Transverse colon (tissue), 4 donors: ENCODE measurements at regions of chr17 and their contacts with region 1.

Region 1: GRCh38 chr17:64281962-64282727 is 19.1 kb upstream of the TEX2 start:
- DNase-seq: peak; percentile 45
- H3K4me3 ChIP-seq: no peak overlapping the region
- H3K27ac ChIP-seq: no peak overlapping the region
- H3K4me1 ChIP-seq: peaks cover 0 to 21% (median 5%) of the 10 kb centered on the region in 4 donors
- H3K27me3 ChIP-seq: no peaks in the 10 kb centered on the region
- CTCF ChIP-seq: peak; percentile 67 to 78 (median 74)
- EP300 ChIP-seq: no peak
- POLR2A ChIP-seq: no peak

Region 2: GRCh38 chr17:63919311-63919723 is 362.8 kb before region 1 on chr17:
- in situ Hi-C with region 1: loop called in 2 of 4 experiments (anchors 25 kb)
- intact Hi-C with region 1: loop called (anchors 10 kb)
- DNase-seq: peak; percentile 69
- H3K4me3 ChIP-seq: no peak overlapping the region
- H3K27ac ChIP-seq: no peak overlapping the region
- H3K4me1 ChIP-seq: no peaks in the 10 kb centered on the region
- H3K27me3 ChIP-seq: no peaks in the 10 kb centered on the region
- CTCF ChIP-seq: peak; percentile 94 to 98 (median 95)
- EP300 ChIP-seq: no peak
- POLR2A ChIP-seq: no peak

Region 3: GRCh38 chr17:64025732-64026294 is 256.3 kb before region 1 on chr17:
- in situ Hi-C with region 1: loop called in 3 of 4 experiments (anchors 25 kb)
- intact Hi-C with region 1: no loop called
- DNase-seq: peak; percentile 87
- H3K4me3 ChIP-seq: peak overlapping the region in 2 of 4 donors; percentile 12 to 17
- H3K27ac ChIP-seq: peak overlapping the region in 1 of 4 donors; percentile 29
- H3K4me1 ChIP-seq: peaks cover 0 to 10% (median 3%) of the 10 kb centered on the region in 4 donors
- H3K27me3 ChIP-seq: no peaks in the 10 kb centered on the region
- CTCF ChIP-seq: peak; percentile 91 to 95 (median 94)
- EP300 ChIP-seq: no peak
- POLR2A ChIP-seq: no peak

Region 4: DNA sequence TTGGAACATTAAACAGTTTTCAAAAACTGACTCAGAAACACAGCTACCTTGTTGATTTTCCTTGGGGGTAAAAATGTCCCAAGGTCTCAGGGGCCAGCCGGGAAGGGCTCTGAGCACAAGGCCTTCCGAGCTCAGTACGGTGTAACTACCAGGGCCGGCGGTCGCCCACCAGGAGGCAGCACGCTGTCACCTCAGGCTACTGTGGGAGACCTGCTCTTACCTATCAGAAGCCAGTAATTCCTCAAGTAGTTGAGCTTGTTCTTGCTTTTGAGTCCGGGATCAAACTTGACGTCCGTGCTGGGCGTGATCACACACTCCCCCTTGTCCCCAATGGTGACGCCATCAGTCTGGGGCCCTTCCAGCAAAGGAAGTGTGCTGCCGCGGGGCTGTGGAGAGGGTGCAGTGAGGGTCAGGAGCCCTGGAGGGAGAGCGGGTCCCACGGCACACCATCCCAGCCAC is 218.3 kb before region 1 on chr17:
- in situ Hi-C with region 1: loop called in 1 of 4 experiments (anchors 25 kb)
- intact Hi-C with region 1: no loop called
- DNase-seq: peak; percentile 76
- H3K4me3 ChIP-seq: peak overlapping the region in 1 of 4 donors; percentile 9
- H3K27ac ChIP-seq: peak overlapping the region; percentile 1 to 72 (median 46)
- H3K4me1 ChIP-seq: peaks cover 0 to 16% (median 6%) of the 10 kb centered on the region in 4 donors
- H3K27me3 ChIP-seq: no peaks in the 10 kb centered on the region
- CTCF ChIP-seq: peak; percentile 40 to 76 (median 61)
- EP300 ChIP-seq: no peak
- POLR2A ChIP-seq: no peak

Region 5: GRCh38 chr17:64155751-64156544 is 126.2 kb before region 1 on chr17:
- in situ Hi-C with region 1: loop called in 2 of 4 experiments (anchors 10 to 25 kb)
- intact Hi-C with region 1: no loop called
- DNase-seq: peak; percentile 27
- H3K4me3 ChIP-seq: no peak overlapping the region
- H3K27ac ChIP-seq: peak overlapping the region; percentile 33 to 54 (median 47)
- H3K4me1 ChIP-seq: peaks cover 7 to 20% (median 11%) of the 10 kb centered on the region in 4 donors
- H3K27me3 ChIP-seq: no peaks in the 10 kb centered on the region
- CTCF ChIP-seq: no peak
- EP300 ChIP-seq: no peak
- POLR2A ChIP-seq: no peak

Region 6: DNA sequence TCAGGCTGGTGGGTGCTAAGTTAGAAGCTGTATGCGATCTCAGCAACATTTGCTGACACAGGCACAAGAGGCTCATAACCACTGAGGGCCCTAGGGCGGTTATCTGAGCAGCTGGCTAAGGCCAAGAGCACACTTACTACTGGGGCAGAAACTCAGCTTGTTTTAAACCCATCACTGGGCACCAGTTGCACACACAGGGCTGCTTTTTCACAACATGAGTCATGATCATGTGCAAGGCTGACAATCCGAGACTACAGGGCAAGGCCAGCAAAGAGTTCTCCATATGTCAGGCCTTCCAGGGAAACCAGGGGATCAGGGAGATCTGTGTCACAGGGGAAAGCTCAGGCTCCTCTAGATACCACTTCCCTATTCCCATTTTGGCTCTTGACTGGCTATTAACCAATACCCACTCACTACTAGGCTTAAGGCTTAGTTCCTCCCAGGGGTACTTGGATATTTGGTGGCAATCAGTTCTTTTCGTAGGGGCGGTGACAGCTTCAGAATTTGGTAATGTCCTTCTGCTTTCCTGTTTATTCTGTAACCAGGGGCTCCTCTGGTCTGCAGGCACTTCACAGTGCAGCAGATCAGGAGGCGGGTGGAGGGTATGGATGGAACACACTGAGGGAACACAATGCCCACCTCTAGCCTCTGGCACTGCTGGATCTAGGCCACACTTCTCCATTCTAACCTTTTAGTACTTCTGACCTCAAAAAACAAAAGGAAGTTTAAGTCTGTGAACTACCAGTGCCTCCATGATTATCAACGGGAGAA is 107.3 kb before region 1 on chr17:
- in situ Hi-C with region 1: loop called in 1 of 4 experiments (anchors 25 kb)
- intact Hi-C with region 1: no loop called
- DNase-seq: no peak
- H3K4me3 ChIP-seq: no peak overlapping the region
- H3K27ac ChIP-seq: peak overlapping the region in 2 of 4 donors; percentile 35 to 38
- H3K4me1 ChIP-seq: peaks cover 0 to 2% (median 0%) of the 10 kb centered on the region in 4 donors
- H3K27me3 ChIP-seq: no peaks in the 10 kb centered on the region
- CTCF ChIP-seq: no peak
- EP300 ChIP-seq: no peak
- POLR2A ChIP-seq: peak; percentile 25

Region 7: GRCh38 chr17:64441772-64442540 is 159.8 kb after region 1 on chr17:
- in situ Hi-C with region 1: no loop called
- intact Hi-C with region 1: no loop called
- DNase-seq: peak; percentile 24
- H3K4me3 ChIP-seq: no peak overlapping the region
- H3K27ac ChIP-seq: peak overlapping the region; percentile 44 to 65 (median 58)
- H3K4me1 ChIP-seq: peaks cover 0 to 15% (median 4%) of the 10 kb centered on the region in 4 donors
- H3K27me3 ChIP-seq: no peaks in the 10 kb centered on the region
- CTCF ChIP-seq: no peak
- EP300 ChIP-seq: no peak
- POLR2A ChIP-seq: no peak